ENCODE measurements at regions of chr11 and their contacts with region 1.

Region 1: GRCh38 chr11:65418711-65419459 is 3.7 kb upstream of the NEAT1 start:
- DNase-seq: peak; percentile 96 to 98
- H3K4me3 ChIP-seq: peak overlapping the region; percentile 9
- H3K4me3 Mint-ChIP-seq: peak overlapping the region; percentile 73
- H3K27ac Mint-ChIP-seq: peak overlapping the region; percentile 95
- H3K4me1 ChIP-seq: peaks cover 55% of the 10 kb centered on the region
- H3K4me1 Mint-ChIP-seq: peaks cover 47% of the 10 kb centered on the region
- H3K27me3 ChIP-seq: no peaks in the 10 kb centered on the region
- H3K27me3 Mint-ChIP-seq: peaks cover 5% of the 10 kb centered on the region
- CTCF ChIP-seq: no peak

Region 2: DNA sequence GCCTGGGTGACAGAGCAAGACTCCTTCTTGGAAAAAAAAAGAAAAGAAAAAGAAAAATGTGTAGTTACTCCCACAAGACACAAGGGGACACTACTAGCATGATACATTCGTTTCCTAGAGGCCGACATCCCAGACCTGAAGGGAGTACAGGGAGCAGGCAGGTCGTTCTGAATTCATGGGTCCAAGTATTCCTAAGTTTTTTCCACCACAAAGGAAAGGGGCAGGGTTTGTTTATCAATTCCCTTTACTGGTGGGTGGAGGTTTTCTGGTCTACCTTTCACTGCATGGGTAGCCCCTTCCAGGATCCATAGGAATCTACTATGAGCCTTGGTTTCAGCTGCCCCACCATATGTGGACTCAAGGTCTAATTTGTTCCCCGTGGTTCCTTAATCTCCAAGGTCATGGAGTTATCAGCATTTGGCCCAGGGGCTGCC is 52.5 kb before region 1 on chr11:
- CTCF ChIA-PET with region 1: interaction called, 4 read pairs
- POLR2A ChIA-PET with region 1: interaction called, 14 read pairs
- intact Hi-C with region 1: loop called (anchors 2 kb)
- DNase-seq: peak; percentile 78
- H3K4me3 ChIP-seq: no peak overlapping the region
- H3K4me3 Mint-ChIP-seq: no peak overlapping the region
- H3K27ac Mint-ChIP-seq: no peak overlapping the region
- H3K4me1 ChIP-seq: peaks cover 31% of the 10 kb centered on the region
- H3K4me1 Mint-ChIP-seq: peaks cover 27% of the 10 kb centered on the region
- H3K27me3 ChIP-seq: no peaks in the 10 kb centered on the region
- H3K27me3 Mint-ChIP-seq: no peaks in the 10 kb centered on the region
- CTCF ChIP-seq: peak; percentile 66 to 85

Region 3: DNA sequence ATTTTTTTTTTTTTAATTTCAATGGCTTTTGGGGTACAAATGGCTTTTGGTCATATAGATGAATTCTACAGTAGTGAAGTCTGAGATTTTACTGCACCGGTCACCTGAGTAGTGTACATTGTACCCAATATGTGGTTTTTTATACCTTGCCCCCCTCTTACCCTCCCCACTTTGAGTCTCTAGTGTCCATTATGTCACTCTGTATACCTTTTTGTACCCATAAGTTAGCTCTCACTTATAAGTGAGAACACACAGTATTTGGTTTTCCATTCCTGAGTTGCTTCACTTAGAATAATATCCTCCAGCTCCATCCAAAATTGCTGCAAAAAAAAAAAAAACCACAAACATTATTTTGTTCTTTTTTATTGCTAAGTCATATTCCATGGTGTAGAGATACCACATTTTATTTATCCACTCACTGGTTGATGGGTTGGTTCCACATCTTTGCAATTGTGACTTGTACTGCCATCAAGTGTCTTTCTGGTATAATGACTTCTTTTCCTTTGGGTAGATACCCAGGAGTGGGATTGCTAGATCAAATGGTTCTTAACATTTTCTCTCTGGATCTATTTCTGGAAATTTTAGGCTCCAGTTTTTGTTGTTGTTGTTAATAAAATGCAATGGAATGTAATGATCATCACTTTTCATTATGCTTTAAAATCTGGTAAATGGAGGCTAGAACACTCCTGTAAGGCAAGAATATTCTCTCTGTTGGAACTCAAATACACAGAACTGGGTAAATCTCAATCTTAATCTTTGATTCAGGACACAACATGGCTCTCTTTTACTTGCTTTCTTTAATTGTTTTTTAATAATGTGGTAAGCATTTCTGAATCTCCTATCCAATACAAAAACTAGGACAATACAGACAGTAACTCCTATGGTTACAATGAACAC is 14.0 kb after region 1 on chr11:
- CTCF ChIA-PET with region 1: interaction called, 5 read pairs
- POLR2A ChIA-PET with region 1: interaction called, 11 read pairs
- intact Hi-C with region 1: loop called (anchors 1 kb)
- DNase-seq: no peak
- H3K4me3 ChIP-seq: no peak overlapping the region
- H3K4me3 Mint-ChIP-seq: no peak overlapping the region
- H3K27ac Mint-ChIP-seq: no peak overlapping the region
- H3K4me1 ChIP-seq: no peaks in the 10 kb centered on the region
- H3K4me1 Mint-ChIP-seq: peaks cover 48% of the 10 kb centered on the region
- H3K27me3 ChIP-seq: no peaks in the 10 kb centered on the region
- H3K27me3 Mint-ChIP-seq: no peaks in the 10 kb centered on the region
- CTCF ChIP-seq: peak; percentile 35 to 49

Region 4: GRCh38 chr11:65471410-65471762 is 52.5 kb after region 1 on chr11:
- CTCF ChIA-PET with region 1: interaction called, 27 read pairs
- POLR2A ChIA-PET with region 1: interaction called, 22 read pairs
- intact Hi-C with region 1: loop called (anchors 1 kb)
- DNase-seq: peak; percentile 83 to 85
- H3K4me3 ChIP-seq: no peak overlapping the region
- H3K4me3 Mint-ChIP-seq: peak overlapping the region; percentile 56
- H3K27ac Mint-ChIP-seq: peak overlapping the region; percentile 96
- H3K4me1 ChIP-seq: peaks cover 35% of the 10 kb centered on the region
- H3K4me1 Mint-ChIP-seq: peaks cover 7% of the 10 kb centered on the region
- H3K27me3 ChIP-seq: no peaks in the 10 kb centered on the region
- H3K27me3 Mint-ChIP-seq: no peaks in the 10 kb centered on the region
- CTCF ChIP-seq: peak; percentile 72 to 81

Region 5: DNA sequence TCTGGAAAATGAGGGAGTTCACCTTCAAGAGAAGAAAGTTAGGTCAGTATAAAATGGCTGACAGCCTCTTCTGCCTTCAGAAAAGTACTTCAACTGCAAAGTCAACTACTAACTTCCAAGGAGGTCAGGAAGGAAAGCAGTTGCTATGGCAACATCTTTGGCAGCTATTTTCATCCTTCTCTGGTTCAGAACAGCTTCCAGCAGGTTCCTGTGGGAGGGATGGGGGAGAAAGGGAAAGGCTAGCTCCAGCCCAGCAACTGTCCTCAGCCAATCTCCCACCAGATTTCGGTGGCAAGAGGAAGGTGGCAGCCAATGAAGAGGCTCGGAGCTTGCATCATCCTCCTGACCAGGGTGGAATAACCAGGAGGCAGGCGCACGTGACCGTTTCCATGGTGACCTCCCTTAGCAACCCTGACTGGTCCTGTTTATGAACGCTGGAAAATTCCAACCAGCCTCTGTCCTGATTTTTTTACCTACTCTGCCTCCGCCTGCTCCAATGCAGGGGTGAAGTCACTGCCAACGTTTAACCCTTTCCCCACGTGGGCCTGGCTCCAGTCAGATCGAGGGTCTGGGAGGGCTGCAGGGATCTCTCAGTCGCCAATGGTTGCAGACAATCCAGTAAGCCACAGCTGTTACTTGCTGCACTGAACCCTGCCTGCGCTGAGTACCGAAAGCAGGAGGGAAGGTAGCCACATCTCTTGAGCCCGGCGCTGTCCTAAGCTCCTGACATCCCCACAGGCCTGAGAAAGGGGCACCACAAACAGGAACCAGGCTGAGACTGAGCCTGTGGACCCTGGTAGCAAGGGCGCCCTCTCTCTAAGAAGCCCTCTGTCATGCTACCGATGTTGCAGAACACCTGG is 68.8 kb after region 1 on chr11:
- CTCF ChIA-PET with region 1: interaction called, 3 read pairs
- POLR2A ChIA-PET with region 1: interaction called, 104 read pairs
- intact Hi-C with region 1: loop called (anchors 1 kb)
- DNase-seq: peak; percentile 99 to 100
- H3K4me3 ChIP-seq: peak overlapping the region; percentile 5
- H3K4me3 Mint-ChIP-seq: peak overlapping the region; percentile 74
- H3K27ac Mint-ChIP-seq: peak overlapping the region; percentile 100
- H3K4me1 ChIP-seq: peaks cover 74% of the 10 kb centered on the region
- H3K4me1 Mint-ChIP-seq: peaks cover 58% of the 10 kb centered on the region
- H3K27me3 ChIP-seq: no peaks in the 10 kb centered on the region
- H3K27me3 Mint-ChIP-seq: no peaks in the 10 kb centered on the region
- CTCF ChIP-seq: no peak

Region 6: DNA sequence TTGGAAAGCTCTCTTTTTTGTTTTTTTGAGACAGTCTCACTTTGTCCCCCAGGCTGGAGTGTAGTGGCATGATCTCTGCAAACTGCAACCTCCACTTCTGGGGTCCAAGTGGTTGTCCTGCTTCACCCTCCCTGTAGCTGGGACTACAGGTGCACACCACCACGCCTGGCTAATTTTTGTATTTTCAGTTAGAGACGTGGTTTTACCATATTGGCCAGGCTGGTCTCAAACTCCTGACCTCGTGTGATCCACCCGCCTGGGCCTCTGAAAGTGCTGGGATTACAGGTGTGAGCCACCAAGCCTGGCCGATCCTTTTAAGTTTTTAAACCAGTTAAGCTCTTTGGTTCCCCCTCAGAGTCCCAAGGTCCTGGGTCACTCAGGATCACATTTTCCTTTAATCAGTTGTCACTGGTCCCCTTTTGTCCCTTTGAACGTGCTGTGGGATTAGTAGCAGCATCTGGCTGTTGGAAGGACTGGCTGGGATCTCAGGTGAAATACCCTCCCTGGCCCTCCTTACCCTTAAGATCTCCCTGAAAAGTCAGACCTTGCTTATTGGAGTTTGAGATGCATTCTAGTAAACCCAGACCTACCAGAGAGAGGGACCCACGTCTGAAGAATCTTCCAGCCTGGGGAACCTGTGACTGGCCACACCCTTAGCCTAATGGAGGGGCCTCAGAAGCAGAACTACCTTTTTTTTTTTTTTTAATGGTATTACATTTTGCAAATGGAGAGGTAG is 88.1 kb after region 1 on chr11:
- CTCF ChIA-PET with region 1: interaction called, 13 read pairs
- POLR2A ChIA-PET with region 1: interaction called, 28 read pairs
- intact Hi-C with region 1: loop called (anchors 1 kb)
- DNase-seq: peak; percentile 72 to 89
- H3K4me3 ChIP-seq: no peak overlapping the region
- H3K4me3 Mint-ChIP-seq: no peak overlapping the region
- H3K27ac Mint-ChIP-seq: no peak overlapping the region
- H3K4me1 ChIP-seq: peaks cover 34% of the 10 kb centered on the region
- H3K4me1 Mint-ChIP-seq: peaks cover 62% of the 10 kb centered on the region
- H3K27me3 ChIP-seq: no peaks in the 10 kb centered on the region
- H3K27me3 Mint-ChIP-seq: peaks cover 2% of the 10 kb centered on the region
- CTCF ChIP-seq: no peak